H1 (cell line): ENCODE measurements at regions of chr5 and their contacts with region 1.

Region 1: GRCh38 chr5:90759119-90759518 is 200.5 kb downstream of the ADGRV1 start:
- DNase-seq: no peak
- H3K4me3 ChIP-seq: no peak overlapping the region
- H3K27ac ChIP-seq: no peak overlapping the region
- H3K4me1 ChIP-seq: no peaks in the 10 kb centered on the region
- H3K27me3 ChIP-seq: no peaks in the 10 kb centered on the region
- CTCF ChIP-seq: no peak
- EP300 ChIP-seq: no peak
- POLR2A ChIP-seq: no peak
- RAD21 ChIP-seq: no peak

Region 2: GRCh38 chr5:90696153-90696552 is 63.0 kb before region 1 on chr5:
- CTCF ChIA-PET with region 1: no interaction called
- POLR2A ChIA-PET with region 1: no interaction called
- DNase-seq: no peak
- H3K4me3 ChIP-seq: no peak overlapping the region
- H3K27ac ChIP-seq: no peak overlapping the region
- H3K4me1 ChIP-seq: no peaks in the 10 kb centered on the region
- H3K27me3 ChIP-seq: no peaks in the 10 kb centered on the region
- CTCF ChIP-seq: no peak
- EP300 ChIP-seq: no peak
- POLR2A ChIP-seq: no peak
- RAD21 ChIP-seq: no peak

Region 3: GRCh38 chr5:90709323-90710155 is 49.6 kb before region 1 on chr5:
- CTCF ChIA-PET with region 1: interaction called, 11 read pairs
- POLR2A ChIA-PET with region 1: no interaction called
- DNase-seq: peak in 1 of 2 experiments; percentile 54
- H3K4me3 ChIP-seq: no peak overlapping the region
- H3K27ac ChIP-seq: no peak overlapping the region
- H3K4me1 ChIP-seq: no peaks in the 10 kb centered on the region
- H3K27me3 ChIP-seq: no peaks in the 10 kb centered on the region
- CTCF ChIP-seq: peak; percentile 18 to 82 (median 75)
- EP300 ChIP-seq: no peak
- POLR2A ChIP-seq: no peak
- RAD21 ChIP-seq: peak; percentile 58 to 61

Region 4: DNA sequence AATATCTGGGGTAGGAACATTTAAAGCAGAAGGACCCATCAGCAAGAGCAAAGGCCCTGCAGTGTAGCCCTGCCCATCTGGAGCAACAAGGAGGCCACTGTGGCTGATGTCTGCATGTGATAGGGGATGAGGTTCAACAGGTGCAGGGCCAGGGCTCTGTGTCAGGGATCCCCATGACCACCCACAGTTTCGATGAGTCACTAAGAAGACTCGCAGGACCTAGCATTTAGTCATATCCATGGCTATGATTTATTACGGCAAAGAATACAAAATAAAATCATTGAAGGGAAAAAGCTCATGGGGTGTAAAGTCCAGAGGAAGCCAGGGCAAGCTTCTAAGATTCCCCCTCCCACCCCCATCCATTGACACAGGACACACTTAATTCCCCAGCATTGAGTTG is 11.9 kb before region 1 on chr5:
- CTCF ChIA-PET with region 1: no interaction called
- POLR2A ChIA-PET with region 1: no interaction called
- DNase-seq: no peak
- H3K4me3 ChIP-seq: no peak overlapping the region
- H3K27ac ChIP-seq: no peak overlapping the region
- H3K4me1 ChIP-seq: peaks cover 0 to 6% (median 2%) of the 10 kb centered on the region in 4 experiments; a peak in 1 of 7 replicates
- H3K27me3 ChIP-seq: no peaks in the 10 kb centered on the region
- CTCF ChIP-seq: no peak
- EP300 ChIP-seq: no peak
- POLR2A ChIP-seq: no peak
- RAD21 ChIP-seq: no peak

Region 5: GRCh38 chr5:90830058-90830457 is 70.9 kb after region 1 on chr5:
- CTCF ChIA-PET with region 1: no interaction called
- POLR2A ChIA-PET with region 1: no interaction called
- DNase-seq: no peak
- H3K4me3 ChIP-seq: no peak overlapping the region
- H3K27ac ChIP-seq: no peak overlapping the region
- H3K4me1 ChIP-seq: no peaks in the 10 kb centered on the region
- H3K27me3 ChIP-seq: peaks cover 0 to 2% (median 0%) of the 10 kb centered on the region in 4 experiments; a peak in 1 of 7 replicates
- CTCF ChIP-seq: no peak
- EP300 ChIP-seq: no peak
- POLR2A ChIP-seq: no peak
- RAD21 ChIP-seq: no peak